ENCODE measurements at regions of chr4 and their contacts with region 1.

Region 1: GRCh38 chr4:175536852-175537453 is 275.1 kb downstream of the GPM6A start:
- DNase-seq: no peak
- ATAC-seq: no peak
- H3K4me3 ChIP-seq: no peak overlapping the region
- H3K4me3 Mint-ChIP-seq: no peak overlapping the region
- H3K27ac ChIP-seq: no peak overlapping the region
- H3K27ac Mint-ChIP-seq: no peak overlapping the region
- H3K4me1 ChIP-seq: no peaks in the 10 kb centered on the region
- H3K4me1 Mint-ChIP-seq: no peaks in the 10 kb centered on the region
- H3K27me3 ChIP-seq: no peaks in the 10 kb centered on the region
- H3K27me3 Mint-ChIP-seq: no peaks in the 10 kb centered on the region

Region 2: DNA sequence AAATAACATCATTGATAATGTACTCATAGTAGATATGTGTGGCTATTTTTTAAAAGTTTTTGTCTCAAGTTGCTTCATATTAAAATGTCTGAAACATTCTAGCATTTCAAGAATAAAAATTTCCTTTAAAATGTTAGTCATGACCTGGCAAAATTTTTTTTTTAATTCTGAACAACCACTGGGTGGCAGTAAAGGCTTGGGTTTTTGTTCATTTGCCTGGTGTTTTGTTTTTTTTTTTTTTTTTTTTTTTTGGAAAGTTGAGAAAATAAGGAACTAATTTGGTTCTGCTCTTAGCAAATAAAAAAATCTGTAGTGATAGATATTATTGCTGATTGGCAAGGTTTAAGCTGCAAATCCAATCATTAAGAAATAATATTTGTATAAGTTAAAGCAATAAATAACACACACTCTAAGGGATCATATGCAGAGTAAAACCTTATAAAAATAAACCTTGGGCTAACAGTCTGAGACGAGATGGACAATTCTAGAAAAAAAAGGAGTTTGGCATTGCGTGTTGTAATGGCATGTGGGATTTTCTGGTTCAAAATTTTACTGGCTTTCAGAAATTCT is 1171.8 kb before region 1 on chr4:
- CTCF ChIA-PET with region 1: no interaction called
- POLR2A ChIA-PET with region 1: no interaction called
- intact Hi-C with region 1: loop called (anchors 5 kb)
- DNase-seq: peak in 5 of 9 donors; percentile 2 to 31 (median 15)
- ATAC-seq: no peak
- H3K4me3 ChIP-seq: no peak overlapping the region
- H3K4me3 Mint-ChIP-seq: no peak overlapping the region
- H3K27ac ChIP-seq: no peak overlapping the region
- H3K27ac Mint-ChIP-seq: no peak overlapping the region
- H3K4me1 ChIP-seq: no peaks in the 10 kb centered on the region
- H3K4me1 Mint-ChIP-seq: no peaks in the 10 kb centered on the region
- H3K27me3 ChIP-seq: peaks cover 0 to 2% of the 10 kb centered on the region in 2 donors
- H3K27me3 Mint-ChIP-seq: peaks cover 0 to 16% (median 0%) of the 10 kb centered on the region in 5 donors

Region 3: DNA sequence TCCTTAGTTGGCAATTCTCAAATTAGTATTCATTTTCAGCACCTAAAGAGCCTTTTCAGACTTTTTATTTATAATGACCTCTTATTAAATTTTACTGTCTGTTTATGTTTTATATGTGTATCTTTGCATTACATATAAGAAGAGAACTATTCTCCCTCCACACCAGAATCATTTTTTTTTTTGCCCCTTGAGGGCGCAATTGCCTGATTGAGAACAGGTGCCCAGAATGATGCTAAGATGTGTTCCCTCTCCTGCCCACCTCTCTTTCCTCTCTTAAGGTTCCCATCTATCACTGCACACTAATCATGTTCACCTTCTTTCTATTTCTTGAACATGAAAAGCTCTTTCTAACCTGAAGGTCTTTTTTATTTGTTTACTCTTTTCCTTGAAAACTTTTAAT is 663.0 kb before region 1 on chr4:
- CTCF ChIA-PET with region 1: no interaction called
- POLR2A ChIA-PET with region 1: no interaction called
- intact Hi-C with region 1: loop called in 1 of 2 experiments (anchors 10 kb)
- DNase-seq: no peak
- ATAC-seq: no peak
- H3K4me3 ChIP-seq: no peak overlapping the region
- H3K4me3 Mint-ChIP-seq: no peak overlapping the region
- H3K27ac ChIP-seq: no peak overlapping the region
- H3K27ac Mint-ChIP-seq: no peak overlapping the region
- H3K4me1 ChIP-seq: no peaks in the 10 kb centered on the region
- H3K4me1 Mint-ChIP-seq: no peaks in the 10 kb centered on the region
- H3K27me3 ChIP-seq: no peaks in the 10 kb centered on the region
- H3K27me3 Mint-ChIP-seq: no peaks in the 10 kb centered on the region

Region 4: GRCh38 chr4:175522607-175523006 is 14.3 kb before region 1 on chr4:
- CTCF ChIA-PET with region 1: no interaction called
- POLR2A ChIA-PET with region 1: no interaction called
- intact Hi-C with region 1: no loop called
- DNase-seq: no peak
- ATAC-seq: no peak
- H3K4me3 ChIP-seq: no peak overlapping the region
- H3K4me3 Mint-ChIP-seq: no peak overlapping the region
- H3K27ac ChIP-seq: no peak overlapping the region
- H3K27ac Mint-ChIP-seq: no peak overlapping the region
- H3K4me1 ChIP-seq: no peaks in the 10 kb centered on the region
- H3K4me1 Mint-ChIP-seq: no peaks in the 10 kb centered on the region
- H3K27me3 ChIP-seq: no peaks in the 10 kb centered on the region
- H3K27me3 Mint-ChIP-seq: no peaks in the 10 kb centered on the region

Region 5: DNA sequence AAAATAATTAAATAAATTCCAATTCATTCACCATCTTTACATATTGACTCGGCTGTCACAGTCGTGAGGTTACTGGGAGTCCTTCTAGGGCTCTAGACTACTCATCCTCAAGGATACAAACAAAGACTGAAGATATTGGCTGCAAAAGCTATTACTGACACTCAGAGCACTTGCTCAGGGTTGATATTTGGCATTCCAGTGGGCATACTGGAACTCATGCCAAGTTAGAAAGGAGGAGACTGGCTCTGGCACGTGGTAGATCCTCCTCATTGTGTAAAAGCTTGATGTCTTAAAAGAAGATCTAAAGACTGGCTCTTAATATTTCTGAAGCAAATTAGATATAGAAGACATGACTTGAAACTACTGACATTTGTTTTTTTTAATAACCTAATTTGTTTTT is 102.4 kb after region 1 on chr4:
- CTCF ChIA-PET with region 1: no interaction called
- POLR2A ChIA-PET with region 1: no interaction called
- intact Hi-C with region 1: no loop called
- DNase-seq: no peak
- ATAC-seq: no peak
- H3K4me3 ChIP-seq: no peak overlapping the region
- H3K4me3 Mint-ChIP-seq: no peak overlapping the region
- H3K27ac ChIP-seq: no peak overlapping the region
- H3K27ac Mint-ChIP-seq: no peak overlapping the region
- H3K4me1 ChIP-seq: no peaks in the 10 kb centered on the region
- H3K4me1 Mint-ChIP-seq: no peaks in the 10 kb centered on the region
- H3K27me3 ChIP-seq: no peaks in the 10 kb centered on the region
- H3K27me3 Mint-ChIP-seq: no peaks in the 10 kb centered on the region

Measured in naive thymus-derived CD4-positive, alpha-beta T cell (primary cell).